Psoas muscle (tissue), 8 donors: ENCODE measurements at regions of chr15 and their contacts with region 1.

Region 1: DNA sequence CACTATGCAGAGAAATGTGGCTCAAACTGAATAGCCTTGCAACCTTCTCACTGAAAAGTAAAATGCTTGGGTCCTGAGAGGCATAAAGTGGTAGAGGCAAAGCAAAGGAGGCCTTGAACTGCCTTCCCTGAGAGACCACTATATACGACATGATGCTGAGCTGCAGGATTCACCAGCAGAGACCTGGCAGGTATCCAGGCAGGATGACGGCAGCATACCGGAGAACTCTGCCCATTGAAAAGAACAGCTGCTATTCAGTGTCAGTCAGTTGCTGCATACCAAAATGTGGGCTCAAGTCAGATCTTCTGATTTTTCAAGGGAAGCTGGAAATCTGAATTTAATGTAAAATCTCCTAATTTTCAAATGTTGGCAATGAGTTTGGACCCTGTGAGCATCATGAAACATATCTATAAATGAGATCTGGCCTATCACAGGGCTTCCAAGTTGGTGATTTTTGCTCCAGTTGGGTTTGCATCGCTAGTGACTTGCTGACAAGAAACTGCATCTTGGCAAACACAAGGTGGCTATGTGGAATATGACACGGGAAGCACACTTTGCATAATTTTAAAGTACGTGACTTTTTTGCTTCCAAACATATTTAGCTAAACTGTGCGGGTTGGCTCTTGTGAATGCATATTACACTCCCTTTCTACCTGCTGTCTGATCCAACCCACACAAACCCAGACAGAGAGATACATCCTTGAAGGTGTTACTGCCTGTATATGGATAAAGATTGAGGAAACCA is 529.0 kb downstream of the AGBL1 start:
- DNase-seq: peak; percentile 47 to 82
- ATAC-seq: peak; percentile 81 to 84 (median 82)
- H3K4me3 ChIP-seq: no peak overlapping the region
- H3K27ac ChIP-seq: peak overlapping the region; percentile 58
- H3K4me1 ChIP-seq: peaks cover 29% of the 10 kb centered on the region
- H3K27me3 ChIP-seq: no peaks in the 10 kb centered on the region
- CTCF ChIP-seq: no peak

Region 2: GRCh38 chr15:85865070-85865684 is 743.5 kb before region 1 on chr15:
- intact Hi-C with region 1: loop called in 1 of 2 experiments (anchors 5 kb)
- DNase-seq: peak in 1 of 2 donors; percentile 25
- ATAC-seq: peak; percentile 56 to 90 (median 76)
- H3K4me3 ChIP-seq: no peak overlapping the region
- H3K27ac ChIP-seq: no peak overlapping the region
- H3K4me1 ChIP-seq: no peaks in the 10 kb centered on the region
- H3K27me3 ChIP-seq: no peaks in the 10 kb centered on the region
- CTCF ChIP-seq: peak; percentile 66